WTC11 (cell line): ENCODE measurements at regions of chr14 and their contacts with region 1.

Region 1: GRCh38 chr14:99982537-99983250 is 82.5 kb upstream of the EVL start:
- DNase-seq: peak; percentile 52
- ATAC-seq: peak; percentile 89
- H3K4me3 Mint-ChIP-seq: no peak overlapping the region
- H3K27ac Mint-ChIP-seq: no peak overlapping the region
- H3K4me1 Mint-ChIP-seq: peaks cover 7% of the 10 kb centered on the region; the same call in 1 of the 2 replicates
- H3K27me3 Mint-ChIP-seq: no peaks in the 10 kb centered on the region
- CTCF ChIP-seq: peak; percentile 53; the same call in 1 of the 2 replicates

Region 2: GRCh38 chr14:99862136-99862535 is 120.6 kb before region 1 on chr14:
- CTCF ChIA-PET with region 1: no interaction called
- POLR2A ChIA-PET with region 1: no interaction called
- DNase-seq: no peak
- ATAC-seq: no peak
- H3K4me3 Mint-ChIP-seq: no peak overlapping the region
- H3K27ac Mint-ChIP-seq: no peak overlapping the region
- H3K4me1 Mint-ChIP-seq: peaks cover 12% of the 10 kb centered on the region
- H3K27me3 Mint-ChIP-seq: no peaks in the 10 kb centered on the region
- CTCF ChIP-seq: no peak

Region 3: DNA sequence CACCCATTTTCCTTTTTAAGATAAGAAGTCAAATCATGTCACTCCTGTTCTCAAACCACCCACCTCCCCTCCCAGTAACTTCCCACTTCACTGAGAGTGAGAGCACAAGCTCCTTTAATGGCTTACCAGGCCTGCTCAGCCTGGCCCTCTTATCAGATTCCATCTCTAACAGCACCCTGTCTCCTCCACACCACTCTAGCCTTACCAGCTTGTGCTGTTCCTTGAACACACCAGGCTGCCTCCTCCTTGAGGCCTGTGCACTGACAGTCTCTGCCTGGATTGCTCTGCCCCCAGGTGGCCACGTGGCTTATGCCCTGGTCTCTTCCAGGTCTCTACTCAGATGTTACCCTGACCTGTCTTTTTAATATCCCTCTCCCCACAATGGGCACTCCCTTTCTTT is 42.4 kb after region 1 on chr14:
- CTCF ChIA-PET with region 1: interaction called, 18 read pairs
- POLR2A ChIA-PET with region 1: no interaction called
- DNase-seq: peak; percentile 64
- ATAC-seq: peak; percentile 98
- H3K4me3 Mint-ChIP-seq: no peak overlapping the region
- H3K27ac Mint-ChIP-seq: no peak overlapping the region
- H3K4me1 Mint-ChIP-seq: peaks cover 8% of the 10 kb centered on the region; the same call in 1 of the 2 replicates
- H3K27me3 Mint-ChIP-seq: peaks cover 36% of the 10 kb centered on the region
- CTCF ChIP-seq: no peak

Region 4: GRCh38 chr14:100037353-100037752 is 54.7 kb after region 1 on chr14:
- CTCF ChIA-PET with region 1: no interaction called
- POLR2A ChIA-PET with region 1: no interaction called
- DNase-seq: no peak
- ATAC-seq: no peak
- H3K4me3 Mint-ChIP-seq: no peak overlapping the region
- H3K27ac Mint-ChIP-seq: no peak overlapping the region
- H3K4me1 Mint-ChIP-seq: no peaks in the 10 kb centered on the region
- H3K27me3 Mint-ChIP-seq: no peaks in the 10 kb centered on the region
- CTCF ChIP-seq: no peak